ENCODE measurements at regions of chr18 and their contacts with region 1.

Region 1: GRCh38 chr18:23515911-23516546 is 12.7 kb downstream of the RMC1 start:
- DNase-seq: peak; percentile 88

Region 2: GRCh38 chr18:23471486-23471885 is 44.5 kb before region 1 on chr18:
- CTCF ChIA-PET with region 1: no interaction called
- POLR2A ChIA-PET with region 1: no interaction called
- DNase-seq: no peak

Region 3: GRCh38 chr18:23586249-23587196 is 70.5 kb after region 1 on chr18 and contains the start of gene NPC1:
- CTCF ChIA-PET with region 1: interaction called, 12 read pairs
- POLR2A ChIA-PET with region 1: no interaction called
- DNase-seq: peak; percentile 95

Region 4: DNA sequence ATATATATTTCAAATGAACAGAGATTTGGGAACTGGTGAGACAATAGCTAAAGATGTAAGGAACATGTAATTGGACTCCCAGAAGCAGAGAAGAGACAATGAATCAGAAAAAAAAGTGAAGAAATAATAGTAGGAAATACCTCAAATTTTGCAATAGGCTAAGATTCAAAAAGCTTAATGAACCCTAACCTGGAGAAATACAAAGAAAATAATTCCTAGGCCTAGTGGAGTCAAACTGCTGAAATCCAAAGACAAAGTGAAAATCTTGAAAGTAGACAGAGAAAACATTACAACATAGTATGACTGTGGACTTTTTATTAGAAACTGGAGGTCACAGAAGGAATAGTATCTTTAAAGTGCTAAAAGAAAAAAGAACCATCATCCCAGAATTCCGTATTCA is 249.9 kb after region 1 on chr18:
- CTCF ChIA-PET with region 1: no interaction called
- POLR2A ChIA-PET with region 1: no interaction called
- DNase-seq: no peak

Measured in HEK293T (cell line).